GM10248 (cell line): ENCODE measurements at regions of chr9 and their contacts with region 1.

Region 1: GRCh38 chr9:109401168-109401989 is 80.5 kb upstream of the EPB41L4B start:
- DNase-seq: peak; percentile 70
- CTCF ChIP-seq: peak; percentile 87

Region 2: GRCh38 chr9:109411798-109412352 is 10.5 kb after region 1 on chr9:
- CTCF ChIA-PET with region 1: interaction called, 79 read pairs
- POLR2A ChIA-PET with region 1: no interaction called
- DNase-seq: peak; percentile 61
- CTCF ChIP-seq: peak; percentile 84

Region 3: DNA sequence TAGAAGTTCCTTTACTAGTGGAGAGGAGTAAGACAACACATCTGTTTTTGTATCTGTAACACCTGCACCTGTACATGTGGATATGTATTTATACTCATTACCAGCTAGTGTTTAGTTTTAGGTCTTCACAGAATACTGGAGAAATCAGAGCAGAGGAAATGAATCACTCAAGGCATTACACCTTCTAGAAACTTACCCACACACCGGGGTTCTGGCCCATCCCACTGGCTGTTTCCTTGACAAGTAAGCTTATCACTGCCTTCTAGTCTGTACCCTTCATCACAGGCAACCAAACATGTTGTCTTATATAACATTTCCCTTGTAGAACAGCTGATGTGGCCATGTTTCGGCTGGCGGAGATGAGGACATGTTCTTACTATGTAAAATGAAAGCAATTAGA is 1101.5 kb after region 1 on chr9:
- CTCF ChIA-PET with region 1: no interaction called
- POLR2A ChIA-PET with region 1: no interaction called
- DNase-seq: no peak
- CTCF ChIP-seq: no peak